ENCODE measurements at regions of chr6 and their contacts with region 1.

Region 1: GRCh38 chr6:28683944-28684538 is 158.4 kb downstream of the GPX5 start:
- DNase-seq: peak; percentile 70
- H3K4me3 Mint-ChIP-seq: no peak overlapping the region
- H3K27ac Mint-ChIP-seq: no peak overlapping the region
- H3K4me1 Mint-ChIP-seq: peaks cover 19% of the 10 kb centered on the region
- H3K27me3 Mint-ChIP-seq: no peaks in the 10 kb centered on the region
- CTCF ChIP-seq: peak; percentile 77

Region 2: GRCh38 chr6:28496099-28496779 is 187.8 kb before region 1 on chr6:
- CTCF ChIA-PET with region 1: interaction called, 9 read pairs
- POLR2A ChIA-PET with region 1: interaction called, 3 read pairs
- intact Hi-C with region 1: loop called (anchors 1 kb)
- DNase-seq: peak; percentile 6
- H3K4me3 Mint-ChIP-seq: no peak overlapping the region
- H3K27ac Mint-ChIP-seq: no peak overlapping the region
- H3K4me1 Mint-ChIP-seq: no peaks in the 10 kb centered on the region
- H3K27me3 Mint-ChIP-seq: no peaks in the 10 kb centered on the region
- CTCF ChIP-seq: no peak

Region 3: DNA sequence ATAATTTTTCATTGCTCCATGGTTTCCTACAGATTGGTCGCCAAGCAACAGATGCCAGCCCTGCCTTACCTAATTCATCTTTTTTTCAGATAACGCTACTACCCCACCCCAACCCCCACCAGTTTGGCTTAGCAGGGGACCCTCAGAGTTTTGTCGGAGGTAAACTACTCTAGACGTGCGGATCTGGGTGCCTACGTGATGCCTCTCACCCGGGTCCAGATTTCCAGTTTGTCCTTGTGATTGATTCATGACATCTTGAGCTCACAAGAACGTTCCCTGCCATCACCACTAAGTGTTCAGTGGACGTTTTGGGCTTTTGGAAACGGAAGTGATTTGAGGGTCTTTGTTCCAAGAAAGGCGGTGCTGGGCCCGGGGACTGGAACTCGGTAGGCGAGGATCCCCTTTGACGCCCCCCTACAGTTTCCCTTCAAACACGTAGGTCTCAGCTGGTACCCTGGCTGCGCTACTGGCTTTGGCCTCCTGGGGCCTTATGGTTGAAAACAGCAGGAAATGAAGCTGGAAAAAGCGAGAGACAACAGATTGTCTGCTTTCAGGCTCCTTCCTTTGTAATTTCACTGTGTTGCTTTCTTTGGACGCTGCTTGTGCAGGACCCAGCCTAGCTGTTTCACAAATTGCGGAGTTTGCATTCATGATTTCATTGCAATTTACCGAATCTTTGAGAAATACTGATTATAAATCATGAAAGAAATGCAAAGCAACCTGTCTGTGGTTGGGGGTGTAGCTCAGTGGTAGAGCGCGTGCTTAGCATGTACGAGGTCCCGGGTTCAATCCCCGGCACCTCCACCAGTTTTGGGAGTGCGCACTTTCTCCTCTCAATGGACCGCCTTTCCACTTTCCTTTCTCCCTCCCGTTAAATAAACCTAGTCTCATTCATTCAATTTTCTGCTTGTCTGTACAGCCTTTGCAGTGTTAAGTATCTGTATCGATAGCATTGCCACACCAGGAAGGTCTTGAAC is 77.3 kb before region 1 on chr6:
- CTCF ChIA-PET with region 1: no interaction called
- POLR2A ChIA-PET with region 1: no interaction called
- intact Hi-C with region 1: no loop called
- DNase-seq: peak; percentile 78
- H3K4me3 Mint-ChIP-seq: peak overlapping the region; percentile 70
- H3K27ac Mint-ChIP-seq: peak overlapping the region; percentile 32
- H3K4me1 Mint-ChIP-seq: peaks cover 6% of the 10 kb centered on the region
- H3K27me3 Mint-ChIP-seq: no peaks in the 10 kb centered on the region
- CTCF ChIP-seq: peak; percentile 54

Region 4: GRCh38 chr6:28618898-28619555 is 65.0 kb before region 1 on chr6:
- CTCF ChIA-PET with region 1: no interaction called
- POLR2A ChIA-PET with region 1: no interaction called
- intact Hi-C with region 1: no loop called
- DNase-seq: no peak
- H3K4me3 Mint-ChIP-seq: no peak overlapping the region
- H3K27ac Mint-ChIP-seq: no peak overlapping the region
- H3K4me1 Mint-ChIP-seq: no peaks in the 10 kb centered on the region
- H3K27me3 Mint-ChIP-seq: no peaks in the 10 kb centered on the region
- CTCF ChIP-seq: no peak

Region 5: GRCh38 chr6:28807682-28808280 is 123.7 kb after region 1 on chr6:
- CTCF ChIA-PET with region 1: interaction called, 4 read pairs
- POLR2A ChIA-PET with region 1: no interaction called
- intact Hi-C with region 1: loop called (anchors 1 kb)
- DNase-seq: peak; percentile 76
- H3K4me3 Mint-ChIP-seq: peak overlapping the region; percentile 41
- H3K27ac Mint-ChIP-seq: no peak overlapping the region
- H3K4me1 Mint-ChIP-seq: peaks cover 23% of the 10 kb centered on the region
- H3K27me3 Mint-ChIP-seq: no peaks in the 10 kb centered on the region
- CTCF ChIP-seq: no peak

Region 6: GRCh38 chr6:29016559-29017427 is 332.8 kb after region 1 on chr6:
- CTCF ChIA-PET with region 1: interaction called, 12 read pairs
- POLR2A ChIA-PET with region 1: no interaction called
- intact Hi-C with region 1: loop called (anchors 1 kb)
- DNase-seq: peak; percentile 89
- H3K4me3 Mint-ChIP-seq: peak overlapping the region; percentile 69
- H3K27ac Mint-ChIP-seq: no peak overlapping the region
- H3K4me1 Mint-ChIP-seq: peaks cover 12% of the 10 kb centered on the region
- H3K27me3 Mint-ChIP-seq: peaks cover 4% of the 10 kb centered on the region
- CTCF ChIP-seq: peak; percentile 79

Region 7: GRCh38 chr6:29142349-29142748 is 458.3 kb after region 1 on chr6:
- CTCF ChIA-PET with region 1: no interaction called
- POLR2A ChIA-PET with region 1: no interaction called
- intact Hi-C with region 1: no loop called
- DNase-seq: no peak
- H3K4me3 Mint-ChIP-seq: no peak overlapping the region
- H3K27ac Mint-ChIP-seq: no peak overlapping the region
- H3K4me1 Mint-ChIP-seq: no peaks in the 10 kb centered on the region
- H3K27me3 Mint-ChIP-seq: peaks cover 55% of the 10 kb centered on the region
- CTCF ChIP-seq: no peak

Measured in MCF 10A (cell line).